ENCODE measurements at regions of chr9 and their contacts with region 1.

Region 1: DNA sequence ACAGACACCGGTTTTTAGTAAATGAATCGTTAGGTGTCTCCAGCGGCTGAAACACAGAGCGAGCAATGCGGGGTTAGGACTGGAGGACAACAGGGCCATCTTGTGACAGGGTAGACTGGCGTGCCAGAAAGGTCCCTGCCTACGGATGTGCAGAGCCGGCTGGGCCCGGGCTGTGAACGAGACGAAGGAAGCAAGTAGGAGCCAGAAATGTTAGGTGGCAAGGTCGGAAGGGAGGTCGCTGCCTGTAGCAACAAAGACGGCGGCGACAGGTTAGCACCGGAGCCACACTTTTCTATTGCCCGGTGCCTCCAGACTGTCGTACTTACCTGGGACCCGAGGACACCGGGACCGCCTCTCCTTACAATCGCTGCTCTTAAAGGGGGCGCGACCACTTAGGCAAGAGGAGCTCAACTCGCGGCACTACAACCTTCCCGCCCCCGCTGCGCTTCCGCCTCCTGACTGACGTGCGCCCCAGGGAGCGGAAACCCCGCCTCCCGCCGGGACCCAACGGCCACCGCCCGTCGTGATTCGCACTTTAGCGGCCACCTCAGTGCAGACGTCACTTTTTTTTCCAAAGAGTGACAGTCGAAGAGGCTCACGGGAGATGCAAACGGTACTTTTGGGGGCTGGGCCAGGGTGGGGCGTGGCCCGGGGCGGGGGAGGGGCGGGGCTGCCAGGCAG is at the start of gene INIP:
- DNase-seq: peak; percentile 99
- ATAC-seq: peak; percentile 99
- total RNA-seq, gene INIP: 17.0 TPM

Region 2: DNA sequence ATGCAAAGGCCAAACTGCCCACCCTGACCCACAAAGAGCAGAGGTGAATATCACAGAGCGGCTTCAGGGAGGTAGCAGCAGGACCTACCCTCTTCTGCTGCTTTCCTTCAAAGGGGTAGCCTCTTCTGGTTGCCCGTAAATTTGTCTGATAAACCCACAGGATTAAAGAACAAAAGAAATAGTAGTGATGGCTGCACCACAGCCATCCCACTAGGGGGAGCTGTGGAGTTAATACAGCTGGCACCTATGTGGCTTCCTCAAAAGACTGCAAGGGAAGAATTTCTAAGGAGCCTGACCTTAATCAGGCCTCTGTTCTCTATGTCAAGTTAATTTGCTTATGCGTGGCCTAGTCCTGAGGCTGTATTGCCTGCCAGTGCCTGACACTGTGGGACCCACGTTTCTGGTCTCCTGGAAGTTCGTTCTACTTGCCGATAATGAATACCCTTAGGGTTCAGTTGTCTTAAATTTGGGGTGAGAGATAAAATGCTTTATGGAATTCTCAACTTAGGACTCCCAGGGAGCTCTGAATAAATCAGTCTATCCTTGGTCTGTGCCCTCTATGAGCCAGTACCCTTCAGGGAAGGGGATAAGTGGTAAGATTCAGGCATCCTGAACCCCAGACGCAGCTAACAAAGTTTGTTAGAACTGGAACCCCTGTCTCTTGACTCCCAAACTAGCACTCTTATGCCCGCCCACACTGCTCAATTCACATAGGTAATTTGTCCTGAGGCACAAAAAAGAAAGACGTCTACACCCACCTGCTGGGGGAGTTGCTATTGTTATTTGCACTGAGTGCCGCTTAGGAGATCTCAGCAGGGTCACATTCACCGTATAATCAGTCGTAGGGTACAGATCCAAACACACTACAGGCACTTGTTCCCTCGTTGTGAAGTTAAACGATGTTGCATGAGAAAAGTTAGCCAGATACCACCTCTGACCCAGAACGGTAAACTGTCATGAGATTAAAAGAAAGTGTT is 619.8 kb before region 1 on chr9:
- intact Hi-C with region 1: loop called (anchors 10 kb)
- DNase-seq: no peak
- ATAC-seq: peak; percentile 85

Region 3: DNA sequence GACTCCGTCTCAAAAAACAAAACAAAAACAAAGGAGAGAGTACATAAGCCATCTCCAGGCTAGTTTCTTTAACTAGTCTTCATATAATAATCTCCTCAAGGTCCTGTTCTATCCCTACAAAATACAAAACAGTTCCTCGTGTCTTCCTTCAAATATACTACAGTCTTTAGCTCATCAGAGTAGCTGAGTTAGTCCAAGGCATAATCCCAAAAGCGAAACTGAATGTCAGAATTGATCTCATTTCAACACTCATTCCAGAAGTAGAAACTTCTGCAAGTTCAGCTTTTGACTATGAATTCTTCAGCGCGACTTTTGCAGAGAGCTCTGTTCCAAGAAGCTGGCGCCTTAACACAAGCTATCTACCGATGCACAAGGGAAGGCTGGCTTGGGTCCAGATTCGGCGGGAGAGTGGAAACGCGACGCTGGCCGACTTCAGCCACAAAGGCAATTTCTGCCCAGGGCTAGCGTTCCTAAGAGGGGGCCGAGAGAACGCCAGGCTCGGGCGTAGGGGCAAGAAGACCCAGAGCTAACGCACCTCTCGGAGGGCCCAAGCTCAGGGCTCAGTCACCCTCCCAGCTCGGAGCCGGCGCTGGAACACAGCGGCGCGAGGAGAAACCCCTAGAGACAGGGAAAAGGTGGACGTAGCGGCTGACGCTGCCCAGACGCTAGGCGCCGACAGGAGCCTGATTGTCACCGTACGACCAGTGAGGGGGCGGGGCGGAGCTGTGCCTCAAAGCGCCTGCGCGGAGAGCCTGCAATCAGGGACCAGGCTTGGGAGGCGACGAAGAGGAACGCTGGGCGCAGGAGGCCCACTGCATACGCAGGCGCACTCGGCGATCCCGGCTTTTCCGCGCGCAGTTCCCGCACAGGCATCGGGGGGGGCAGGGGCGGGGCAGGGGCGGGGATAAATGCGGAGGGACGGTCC is 338.4 kb before region 1 on chr9:
- intact Hi-C with region 1: loop called (anchors 10 kb)
- DNase-seq: peak; percentile 100
- ATAC-seq: peak; percentile 97

Region 4: GRCh38 chr9:112750111-112750767 is 32.4 kb after region 1 on chr9 and contains the start of gene SNX30:
- intact Hi-C with region 1: loop called (anchors 2 kb)
- DNase-seq: peak; percentile 96
- ATAC-seq: peak; percentile 98
- total RNA-seq, gene SNX30: 5.0 TPM

Region 5: GRCh38 chr9:112793213-112793810 is 75.5 kb after region 1 on chr9:
- intact Hi-C with region 1: loop called (anchors 10 kb)
- DNase-seq: peak; percentile 78
- ATAC-seq: peak; percentile 60